HepG2 (cell line): ENCODE measurements at regions of chr2 and their contacts with region 1.

Region 1: DNA sequence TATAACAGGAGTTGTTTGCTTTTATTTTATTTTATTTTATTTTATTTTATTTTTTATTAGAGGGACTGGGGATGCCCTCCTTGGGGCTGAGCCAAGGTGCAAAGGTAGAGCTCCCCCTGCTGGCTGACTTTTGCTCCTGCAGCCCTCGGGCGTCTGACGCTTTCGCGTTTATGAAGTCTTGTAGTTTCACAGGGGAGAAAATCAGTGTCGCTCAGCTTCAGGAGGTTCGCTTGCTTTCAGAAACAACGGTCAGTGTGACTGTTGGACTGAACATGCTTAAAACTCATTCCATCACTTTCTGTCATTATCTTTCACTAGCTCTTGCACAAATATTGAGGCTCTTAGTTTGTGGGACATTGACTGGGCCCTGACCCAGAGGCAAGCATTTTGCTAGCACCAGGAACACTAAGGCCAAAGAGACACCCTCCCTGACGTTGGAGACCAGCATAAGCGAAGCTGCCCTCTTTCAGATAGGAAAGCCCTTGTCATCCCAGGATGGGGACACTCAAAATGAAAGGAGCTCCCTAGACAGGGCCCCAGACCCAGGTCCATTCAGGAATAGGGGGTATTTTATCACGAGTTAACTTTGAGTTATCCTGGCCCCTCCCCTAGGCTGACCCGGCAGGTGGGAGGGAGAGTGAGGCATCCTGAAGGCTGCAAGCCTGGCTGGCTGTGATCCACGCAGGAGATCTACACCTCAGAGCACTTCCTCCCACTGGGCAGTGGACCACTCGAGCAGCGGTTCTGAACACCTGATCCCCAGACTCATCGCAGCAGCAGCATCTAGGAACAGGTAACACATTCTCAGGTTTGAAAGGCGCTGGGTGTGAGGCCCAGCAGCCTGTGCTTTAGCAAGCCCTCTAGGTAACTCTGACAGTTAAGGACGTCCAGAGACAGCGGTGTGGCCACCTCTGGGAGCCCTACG is 34.4 kb downstream of the LGALSL start:
- DNase-seq: peak; percentile 47
- ATAC-seq: peak; percentile 81
- H3K4me3 ChIP-seq: peak overlapping the region in 2 of 3 experiments; percentile 30 to 53; a peak in 3 of 6 replicates
- H3K27ac ChIP-seq: no peak overlapping the region
- H3K4me1 ChIP-seq: peaks cover 6% of the 10 kb centered on the region
- H3K27me3 ChIP-seq: peaks cover 7 to 48% of the 10 kb centered on the region in 2 experiments
- CTCF ChIP-seq: peak; percentile 81
- EP300 ChIP-seq: no peak
- POLR2A ChIP-seq: no peak
- RAD21 ChIP-seq: peak; percentile 77

Region 2: GRCh38 chr2:64052468-64053241 is 435.7 kb before region 1 on chr2:
- CTCF ChIA-PET with region 1: interaction called, 7 read pairs
- POLR2A ChIA-PET with region 1: no interaction called
- in situ Hi-C with region 1: loop called (anchors 10 kb)
- intact Hi-C with region 1: loop called (anchors 1 kb)
- DNase-seq: no peak
- ATAC-seq: no peak
- H3K4me3 ChIP-seq: no peak overlapping the region
- H3K27ac ChIP-seq: no peak overlapping the region
- H3K4me1 ChIP-seq: peaks cover 10% of the 10 kb centered on the region
- H3K27me3 ChIP-seq: 0 out of 5 replicates have a peak, but pooled peaks cover 0 to 2% of the 10 kb centered on the region in 2 experiments
- CTCF ChIP-seq: no peak
- EP300 ChIP-seq: no peak
- POLR2A ChIP-seq: no peak
- RAD21 ChIP-seq: no peak

Region 3: DNA sequence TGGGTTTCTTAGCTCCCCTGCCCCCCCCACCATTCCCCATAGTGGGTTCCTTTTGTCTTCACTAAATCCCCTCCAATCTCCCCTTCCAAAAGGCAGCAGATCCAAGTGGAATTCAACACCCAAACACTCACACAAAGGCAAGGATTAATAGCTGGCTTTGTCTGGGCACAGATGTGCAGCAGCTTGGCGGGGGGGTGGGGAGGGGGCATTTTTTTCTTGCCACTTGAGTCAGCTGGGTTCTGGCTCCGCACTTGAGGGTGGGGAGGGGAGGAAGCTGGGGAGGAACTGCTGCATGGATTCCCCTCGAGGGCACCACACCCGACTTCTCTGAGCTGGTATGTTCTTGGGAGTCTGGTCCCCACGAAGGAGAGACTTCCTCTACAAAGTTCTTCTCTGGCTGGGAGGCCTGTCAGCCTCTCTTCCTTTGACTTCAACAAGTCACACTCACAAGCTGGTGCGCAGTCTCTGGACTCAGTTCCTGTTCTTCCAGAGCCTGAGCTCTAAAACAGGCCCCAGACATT is 129.4 kb after region 1 on chr2:
- CTCF ChIA-PET with region 1: no interaction called
- POLR2A ChIA-PET with region 1: no interaction called
- in situ Hi-C with region 1: no loop called
- intact Hi-C with region 1: no loop called
- DNase-seq: no peak
- ATAC-seq: no peak
- H3K4me3 ChIP-seq: no peak overlapping the region
- H3K27ac ChIP-seq: no peak overlapping the region
- H3K4me1 ChIP-seq: peaks cover 9% of the 10 kb centered on the region
- H3K27me3 ChIP-seq: peaks cover 1% of the 10 kb centered on the region in 2 experiments; a peak in 2 of 5 replicates
- CTCF ChIP-seq: no peak
- EP300 ChIP-seq: no peak
- POLR2A ChIP-seq: no peak
- RAD21 ChIP-seq: no peak

Region 4: GRCh38 chr2:64750817-64751285 is 262.5 kb after region 1 on chr2:
- CTCF ChIA-PET with region 1: no interaction called
- POLR2A ChIA-PET with region 1: no interaction called
- in situ Hi-C with region 1: no loop called
- intact Hi-C with region 1: no loop called
- DNase-seq: peak; percentile 99
- ATAC-seq: peak; percentile 92
- H3K4me3 ChIP-seq: peak overlapping the region; percentile 80 to 93 (median 89)
- H3K27ac ChIP-seq: peak overlapping the region; percentile 80
- H3K4me1 ChIP-seq: peaks cover 42% of the 10 kb centered on the region
- H3K27me3 ChIP-seq: no peaks in the 10 kb centered on the region; a peak in 1 of 5 replicates
- CTCF ChIP-seq: no peak; the same call in 1 of the 2 replicates
- EP300 ChIP-seq: peak in 1 of 2 experiments; percentile 9; a peak in 2 of 4 replicates
- POLR2A ChIP-seq: peak; percentile 73 to 92
- RAD21 ChIP-seq: peak; percentile 59; the same call in 1 of the 2 replicates